Left ventricle myocardium inferior (tissue), 1 donor: ENCODE measurements at regions of chr13 and their contacts with region 1.

Region 1: DNA sequence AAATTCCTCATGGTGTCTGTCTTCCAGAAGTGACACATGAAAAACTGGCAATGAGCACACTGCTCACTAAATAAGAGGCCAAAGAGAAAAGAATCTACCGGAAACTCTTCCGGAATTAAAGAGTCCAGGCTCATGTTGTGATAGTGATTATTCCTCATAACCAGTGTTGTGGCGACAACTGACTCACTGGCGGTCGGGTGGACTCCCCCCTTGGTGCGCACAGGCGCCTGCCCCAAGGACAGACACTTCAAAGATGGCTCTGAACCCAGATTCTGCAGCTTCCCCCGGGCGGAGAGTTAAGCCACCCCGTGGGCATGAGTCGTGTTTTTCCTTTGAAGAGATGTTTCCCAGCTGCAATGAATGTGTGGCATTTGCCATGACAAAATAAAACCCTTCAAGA is 10.3 kb downstream of the IL17D start:
- DNase-seq: no peak
- H3K4me3 ChIP-seq: no peak overlapping the region
- H3K27ac ChIP-seq: peak overlapping the region; percentile 80
- H3K4me1 ChIP-seq: peaks cover 32% of the 10 kb centered on the region
- H3K27me3 ChIP-seq: no peaks in the 10 kb centered on the region
- CTCF ChIP-seq: no peak

Region 2: GRCh38 chr13:20495082-20496023 is 218.4 kb before region 1 on chr13:
- intact Hi-C with region 1: loop called (anchors 10 kb)
- DNase-seq: no peak
- H3K4me3 ChIP-seq: peak overlapping the region; percentile 37
- H3K27ac ChIP-seq: no peak overlapping the region
- H3K4me1 ChIP-seq: peaks cover 12% of the 10 kb centered on the region
- H3K27me3 ChIP-seq: no peaks in the 10 kb centered on the region
- CTCF ChIP-seq: peak; percentile 98

Region 3: DNA sequence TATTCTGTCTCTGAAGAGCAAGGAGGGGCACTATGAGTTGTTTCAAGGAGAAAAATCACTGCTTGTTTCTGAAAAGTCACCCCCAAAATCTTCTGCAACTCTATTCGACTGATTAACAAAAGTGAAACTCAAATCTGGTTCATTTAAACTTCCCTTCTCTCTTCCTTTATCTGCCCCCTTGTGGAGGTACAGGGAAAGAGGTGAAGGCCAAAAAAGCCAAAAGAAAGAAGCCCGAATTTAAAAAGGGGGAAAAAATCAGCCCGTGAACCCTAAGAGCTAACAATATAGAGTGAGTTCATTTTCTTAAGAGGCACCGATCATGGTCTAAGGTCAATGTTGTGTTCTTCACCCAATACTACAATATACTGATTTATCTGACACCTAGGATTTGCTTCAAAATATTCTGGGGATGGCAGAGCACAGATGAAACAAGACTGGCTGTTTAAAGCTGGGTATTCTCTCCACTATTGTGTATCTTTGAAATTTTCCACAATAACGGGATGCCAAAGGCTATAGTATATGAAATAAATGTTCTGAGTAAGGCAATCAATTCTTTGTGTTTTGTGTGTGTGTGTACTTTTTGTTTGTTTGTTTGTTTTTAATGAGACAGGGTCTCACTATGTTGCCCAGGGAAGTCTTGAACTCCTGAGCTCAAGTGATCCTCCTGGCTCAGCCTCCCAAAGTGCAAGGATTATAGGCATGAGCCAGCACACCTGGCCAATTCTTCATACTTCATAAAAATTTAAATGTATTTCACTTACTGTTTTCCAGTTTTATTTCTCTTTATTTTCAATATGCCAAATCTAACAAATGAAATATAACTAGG is 115.0 kb after region 1 on chr13:
- intact Hi-C with region 1: loop called (anchors 5 kb)
- DNase-seq: no peak
- H3K4me3 ChIP-seq: peak overlapping the region; percentile 52
- H3K27ac ChIP-seq: peak overlapping the region; percentile 83
- H3K4me1 ChIP-seq: peaks cover 54% of the 10 kb centered on the region
- H3K27me3 ChIP-seq: no peaks in the 10 kb centered on the region
- CTCF ChIP-seq: peak; percentile 90

Region 4: DNA sequence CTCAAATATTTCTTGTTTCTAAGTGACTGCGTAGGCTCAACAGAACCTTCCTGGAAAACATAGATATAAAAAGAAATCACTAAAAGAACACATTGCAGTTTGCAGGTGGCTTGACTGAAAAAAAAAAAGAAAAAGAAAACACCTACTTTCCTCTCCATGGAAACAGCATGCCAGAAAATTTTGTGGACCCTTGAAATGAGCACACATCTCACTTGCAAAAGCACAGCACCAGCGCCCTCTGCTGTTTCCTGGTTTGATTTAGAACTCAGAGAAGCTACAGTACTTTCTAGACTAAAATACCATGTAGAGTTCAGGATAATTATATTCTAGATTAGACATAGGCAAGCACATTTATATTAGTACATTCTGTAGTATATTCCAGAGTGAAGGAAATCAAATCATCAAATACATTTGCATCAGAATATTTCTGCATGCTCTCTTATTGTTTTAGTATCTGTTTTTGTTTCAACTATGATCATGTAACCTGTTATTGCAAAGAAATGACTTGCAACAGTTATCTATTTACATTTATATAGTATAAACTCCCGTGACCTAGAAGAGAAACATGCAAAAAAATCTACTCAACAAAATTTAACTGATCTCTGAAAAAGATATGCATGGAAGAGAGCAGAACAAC is 211.1 kb after region 1 on chr13:
- intact Hi-C with region 1: loop called (anchors 5 kb)
- DNase-seq: peak; percentile 60
- H3K4me3 ChIP-seq: no peak overlapping the region
- H3K27ac ChIP-seq: no peak overlapping the region
- H3K4me1 ChIP-seq: no peaks in the 10 kb centered on the region
- H3K27me3 ChIP-seq: no peaks in the 10 kb centered on the region
- CTCF ChIP-seq: peak; percentile 82